HEK293 (cell line): ENCODE measurements at regions of chrX and their contacts with region 1.

Region 1: GRCh38 chrX:131783555-131784308 is 239.4 kb upstream of the STK26 start:
- H3K4me3 ChIP-seq: no peak overlapping the region
- H3K27ac ChIP-seq: 0 out of 2 replicates have a peak overlapping the region, but pooled peaks have one; percentile 35
- H3K4me1 ChIP-seq: 0 out of 2 replicates have a peak, but pooled peaks cover 3% of the 10 kb centered on the region
- CTCF ChIP-seq: peak; percentile 78

Region 2: DNA sequence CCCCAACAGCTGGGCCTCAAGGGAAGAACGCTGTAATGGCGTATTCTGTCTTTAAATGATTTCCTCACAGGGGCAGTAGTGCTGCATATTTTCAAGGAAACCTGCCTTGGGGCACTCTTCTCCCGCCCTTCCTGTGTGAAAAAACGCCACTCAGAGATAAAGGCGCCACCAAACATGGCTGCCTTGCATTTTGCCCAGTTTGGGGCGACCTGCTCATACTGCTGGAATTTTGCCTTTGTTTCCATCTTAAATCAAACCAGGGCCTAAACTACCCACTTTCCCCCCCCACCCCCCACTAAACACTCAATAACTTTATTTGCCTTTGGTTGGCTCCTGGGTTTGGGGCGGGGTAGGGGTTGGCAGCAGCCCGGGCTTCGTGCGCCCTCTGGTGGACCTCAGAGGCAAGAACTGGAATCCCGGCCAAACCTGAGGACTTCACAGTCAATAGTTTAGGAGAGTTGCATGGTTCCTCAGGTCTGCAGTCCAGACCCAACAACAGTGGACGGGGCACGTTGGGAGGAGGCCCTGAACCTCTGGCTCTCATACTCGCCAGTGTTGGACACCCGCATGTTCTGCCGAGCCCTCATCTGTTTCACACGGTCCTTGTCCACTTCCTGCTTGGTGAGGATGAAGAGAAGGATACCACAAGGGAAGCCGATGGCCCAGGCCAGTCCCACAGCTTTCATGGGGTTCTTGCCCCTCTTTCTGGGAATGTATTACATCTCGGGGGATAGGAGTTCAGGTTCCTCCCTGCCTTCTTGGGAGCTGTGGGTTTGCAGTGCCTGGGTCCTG is 19.3 kb after region 1 on chrX:
- CTCF ChIA-PET with region 1: interaction called, 10 read pairs
- POLR2A ChIA-PET with region 1: interaction called, 3 read pairs
- H3K4me3 ChIP-seq: peak overlapping the region; percentile 6
- H3K27ac ChIP-seq: peak overlapping the region; percentile 67
- H3K4me1 ChIP-seq: no peaks in the 10 kb centered on the region; the same call in 1 of the 2 replicates
- CTCF ChIP-seq: peak; percentile 68

Region 3: DNA sequence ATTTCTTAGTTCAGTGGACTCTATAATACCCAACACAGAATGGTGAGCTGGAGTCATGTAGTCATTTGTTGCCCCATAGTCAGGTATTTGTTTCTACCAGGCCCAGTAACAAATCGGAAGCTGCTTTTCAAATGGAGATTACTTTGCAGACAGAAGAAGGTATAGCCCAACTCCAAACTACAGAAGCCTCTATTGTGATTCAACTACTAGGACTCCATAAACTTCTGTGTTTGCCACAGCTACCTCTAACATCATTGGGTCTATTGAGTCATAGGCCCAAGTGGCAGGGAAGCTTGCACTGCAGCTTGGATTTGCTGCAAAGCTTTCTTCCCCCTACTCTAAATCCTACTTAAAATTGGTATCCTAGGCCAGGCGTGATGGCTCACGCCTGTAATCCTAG is 90.6 kb after region 1 on chrX:
- CTCF ChIA-PET with region 1: no interaction called
- POLR2A ChIA-PET with region 1: no interaction called
- H3K4me3 ChIP-seq: no peak overlapping the region
- H3K27ac ChIP-seq: no peak overlapping the region
- H3K4me1 ChIP-seq: no peaks in the 10 kb centered on the region
- CTCF ChIP-seq: no peak